Activated B cell treated with CpG ODN at 0.5 μM for 24 hours (primary cell): ENCODE measurements at regions of chr22 and their contacts with region 1.

Region 1: GRCh38 chr22:43014869-43015676 is at the start of gene PACSIN2:
- DNase-seq: peak; percentile 97
- ATAC-seq: peak; percentile 98
- H3K4me3 Mint-ChIP-seq: peak within 1 kb of the TSS; percentile 95
- H3K27ac Mint-ChIP-seq: peak within 1 kb of the TSS; percentile 89
- H3K4me1 Mint-ChIP-seq: peaks cover 31% of the 10 kb centered on the region
- H3K27me3 Mint-ChIP-seq: no peaks in the 10 kb centered on the region
- CTCF ChIP-seq: no peak
- total RNA-seq, gene PACSIN2: 47.5 and 48.9 TPM in 2 replicates

Region 2: GRCh38 chr22:42856865-42857704 is 158.0 kb before region 1 on chr22 and contains the start of gene ARFGAP3:
- CTCF ChIA-PET with region 1: no interaction called
- POLR2A ChIA-PET with region 1: interaction called, 5 read pairs
- intact Hi-C with region 1: loop called (anchors 2 kb)
- DNase-seq: peak; percentile 99
- ATAC-seq: peak; percentile 93
- H3K4me3 Mint-ChIP-seq: peak within 1 kb of the TSS; percentile 86
- H3K27ac Mint-ChIP-seq: peak within 1 kb of the TSS; percentile 80
- H3K4me1 Mint-ChIP-seq: peaks cover 35% of the 10 kb centered on the region
- H3K27me3 Mint-ChIP-seq: no peaks in the 10 kb centered on the region
- CTCF ChIP-seq: no peak
- total RNA-seq, gene ARFGAP3: 35.2 and 37.3 TPM in 2 replicates

Region 3: DNA sequence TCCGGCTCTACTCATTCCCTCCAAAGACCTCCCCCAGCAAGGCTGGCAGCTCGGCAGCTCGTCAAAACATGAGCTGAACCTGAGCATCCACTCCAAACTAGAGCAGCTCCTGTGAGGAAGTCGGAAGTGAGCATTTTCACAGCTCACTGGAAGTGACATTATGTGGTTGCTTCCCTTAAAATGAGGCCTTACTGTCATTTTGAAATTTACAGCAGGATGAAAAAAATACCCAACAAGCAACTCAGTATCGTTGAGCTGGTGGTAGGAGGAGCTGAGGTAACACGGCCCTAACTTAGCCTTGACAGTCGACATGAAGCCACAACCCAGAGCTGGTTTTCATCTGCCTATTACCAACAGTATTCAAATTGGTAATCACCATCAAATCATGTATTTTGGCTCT is 120.0 kb before region 1 on chr22:
- CTCF ChIA-PET with region 1: interaction called, 3 read pairs
- POLR2A ChIA-PET with region 1: interaction called, 11 read pairs
- intact Hi-C with region 1: no loop called
- DNase-seq: no peak
- ATAC-seq: peak; percentile 82
- H3K4me3 Mint-ChIP-seq: peak overlapping the region; percentile 55
- H3K27ac Mint-ChIP-seq: peak overlapping the region; percentile 81
- H3K4me1 Mint-ChIP-seq: peaks cover 74% of the 10 kb centered on the region
- H3K27me3 Mint-ChIP-seq: no peaks in the 10 kb centered on the region
- CTCF ChIP-seq: no peak

Region 4: DNA sequence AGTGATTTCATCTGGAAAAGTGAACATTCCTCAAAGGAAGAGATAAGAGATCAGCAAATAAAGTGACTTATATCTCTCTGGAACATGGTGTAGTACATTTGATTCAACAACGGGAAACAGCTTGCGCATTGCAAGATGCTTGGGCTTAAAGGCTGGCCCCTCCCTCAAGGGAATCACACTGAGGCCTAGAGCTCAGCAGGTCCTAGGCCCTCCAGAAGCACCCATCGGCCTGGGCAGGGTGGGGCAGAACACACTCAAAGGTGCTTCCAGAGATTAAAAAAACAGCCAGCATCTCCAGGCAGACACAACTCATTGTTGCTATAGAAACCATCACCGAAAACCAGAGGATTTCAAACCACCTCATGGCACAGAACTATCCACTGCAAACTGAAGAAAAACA is 89.0 kb before region 1 on chr22:
- CTCF ChIA-PET with region 1: interaction called, 4 read pairs
- POLR2A ChIA-PET with region 1: interaction called, 18 read pairs
- intact Hi-C with region 1: loop called (anchors 1 kb)
- DNase-seq: no peak
- ATAC-seq: no peak
- H3K4me3 Mint-ChIP-seq: peak overlapping the region; percentile 9
- H3K27ac Mint-ChIP-seq: peak overlapping the region; percentile 51
- H3K4me1 Mint-ChIP-seq: peaks cover 78% of the 10 kb centered on the region
- H3K27me3 Mint-ChIP-seq: no peaks in the 10 kb centered on the region
- CTCF ChIP-seq: no peak

Region 5: GRCh38 chr22:42967933-42968332 is 47.1 kb before region 1 on chr22:
- CTCF ChIA-PET with region 1: no interaction called
- POLR2A ChIA-PET with region 1: interaction called, 24 read pairs
- intact Hi-C with region 1: loop called (anchors 2 kb)
- DNase-seq: no peak
- ATAC-seq: peak; percentile 40
- H3K4me3 Mint-ChIP-seq: no peak overlapping the region
- H3K27ac Mint-ChIP-seq: peak overlapping the region; percentile 46
- H3K4me1 Mint-ChIP-seq: peaks cover 54% of the 10 kb centered on the region
- H3K27me3 Mint-ChIP-seq: no peaks in the 10 kb centered on the region
- CTCF ChIP-seq: no peak

Region 6: GRCh38 chr22:43042101-43042780 is 27.2 kb after region 1 on chr22:
- CTCF ChIA-PET with region 1: no interaction called
- POLR2A ChIA-PET with region 1: no interaction called
- intact Hi-C with region 1: no loop called
- DNase-seq: no peak
- ATAC-seq: no peak
- H3K4me3 Mint-ChIP-seq: no peak overlapping the region
- H3K27ac Mint-ChIP-seq: no peak overlapping the region
- H3K4me1 Mint-ChIP-seq: no peaks in the 10 kb centered on the region
- H3K27me3 Mint-ChIP-seq: no peaks in the 10 kb centered on the region
- CTCF ChIP-seq: no peak

Region 7: GRCh38 chr22:43088979-43089717 is 74.1 kb after region 1 on chr22 and contains the start of gene TTLL1:
- CTCF ChIA-PET with region 1: no interaction called
- POLR2A ChIA-PET with region 1: interaction called, 5 read pairs
- intact Hi-C with region 1: loop called (anchors 1 kb)
- DNase-seq: peak; percentile 83
- ATAC-seq: peak; percentile 96
- H3K4me3 Mint-ChIP-seq: peak within 1 kb of the TSS; percentile 88
- H3K27ac Mint-ChIP-seq: peak within 1 kb of the TSS; percentile 56
- H3K4me1 Mint-ChIP-seq: peaks cover 21% of the 10 kb centered on the region
- H3K27me3 Mint-ChIP-seq: no peaks in the 10 kb centered on the region
- CTCF ChIP-seq: no peak
- total RNA-seq, gene TTLL1: 1.2 and 1.5 TPM in 2 replicates